HEK293T (cell line): ENCODE measurements at regions of chr1 and their contacts with region 1.

Region 1: DNA sequence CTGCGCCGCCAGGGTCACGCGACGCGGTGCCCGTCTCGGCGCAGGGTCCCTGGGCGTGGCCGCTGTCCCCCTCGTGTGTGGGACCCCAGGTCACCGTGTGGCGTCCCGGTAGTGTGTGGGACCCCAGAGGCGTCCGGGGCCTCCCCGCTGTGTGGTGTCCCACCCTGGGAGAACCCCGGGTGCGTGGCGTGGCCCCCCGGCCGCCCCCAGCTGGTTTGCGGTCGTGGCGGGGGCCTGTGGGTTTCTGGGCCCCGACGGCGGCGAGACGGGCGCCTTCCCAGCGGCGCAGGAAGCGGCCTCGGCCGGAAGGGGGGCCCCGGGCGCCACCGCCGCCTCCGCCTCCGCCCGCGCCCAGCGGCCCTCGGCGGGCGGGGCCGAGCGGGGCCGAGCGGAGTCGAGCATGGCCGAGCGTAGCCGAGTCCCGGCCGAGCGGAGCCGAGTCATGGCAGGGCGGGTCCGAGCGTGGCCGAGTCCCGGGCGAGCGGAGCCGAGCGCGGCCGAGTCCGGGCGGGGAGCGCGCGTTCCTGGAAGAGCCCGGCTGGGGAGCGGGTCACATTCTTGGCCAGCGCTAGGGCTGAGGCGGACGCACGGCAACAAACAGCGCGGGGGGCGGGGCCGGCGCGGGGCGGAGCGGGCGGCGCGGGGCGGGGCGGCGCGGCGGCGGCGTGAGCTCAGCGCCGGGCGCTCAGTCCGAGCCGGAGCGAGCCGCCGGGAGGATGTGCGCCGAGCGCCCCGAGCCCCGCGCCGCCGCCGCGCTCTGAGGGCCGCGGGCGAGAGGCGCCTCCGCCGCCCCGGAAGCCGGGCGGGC is 569 bp upstream of the SKI start:
- DNase-seq: peak; percentile 99

Region 2: DNA sequence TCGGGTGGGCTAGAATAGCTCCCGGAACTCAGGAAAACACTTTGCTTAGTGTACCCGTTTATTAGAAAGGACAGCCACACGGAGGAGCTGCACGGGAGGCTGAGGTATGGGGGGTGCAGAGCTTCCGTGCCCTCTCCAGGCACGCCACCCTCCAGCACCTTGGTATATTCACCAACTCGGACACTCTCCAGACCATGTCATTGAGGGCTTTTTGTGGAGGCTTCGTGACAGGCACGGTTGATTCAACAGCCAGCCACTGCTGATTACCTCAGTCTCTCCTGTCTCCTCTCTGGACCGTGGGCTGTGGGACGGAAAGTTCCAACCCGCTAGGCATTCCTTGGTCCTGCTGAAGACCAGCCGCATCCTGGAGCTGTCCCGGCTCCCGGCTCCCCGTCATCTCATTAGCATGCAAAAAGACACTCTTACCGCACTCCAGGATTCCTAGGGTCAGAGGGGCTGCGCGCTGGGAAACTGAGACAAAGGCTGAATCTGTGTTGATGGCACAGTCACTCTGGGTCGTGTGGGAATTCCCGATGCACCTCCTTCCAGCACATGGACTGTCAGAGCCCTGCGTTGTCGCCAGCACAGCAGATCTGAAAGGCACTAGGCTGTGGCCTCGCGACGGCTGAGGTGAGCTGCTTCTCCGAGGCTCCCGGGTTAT is 111.7 kb before region 1 on chr1:
- CTCF ChIA-PET with region 1: no interaction called
- POLR2A ChIA-PET with region 1: no interaction called
- DNase-seq: no peak

Region 3: DNA sequence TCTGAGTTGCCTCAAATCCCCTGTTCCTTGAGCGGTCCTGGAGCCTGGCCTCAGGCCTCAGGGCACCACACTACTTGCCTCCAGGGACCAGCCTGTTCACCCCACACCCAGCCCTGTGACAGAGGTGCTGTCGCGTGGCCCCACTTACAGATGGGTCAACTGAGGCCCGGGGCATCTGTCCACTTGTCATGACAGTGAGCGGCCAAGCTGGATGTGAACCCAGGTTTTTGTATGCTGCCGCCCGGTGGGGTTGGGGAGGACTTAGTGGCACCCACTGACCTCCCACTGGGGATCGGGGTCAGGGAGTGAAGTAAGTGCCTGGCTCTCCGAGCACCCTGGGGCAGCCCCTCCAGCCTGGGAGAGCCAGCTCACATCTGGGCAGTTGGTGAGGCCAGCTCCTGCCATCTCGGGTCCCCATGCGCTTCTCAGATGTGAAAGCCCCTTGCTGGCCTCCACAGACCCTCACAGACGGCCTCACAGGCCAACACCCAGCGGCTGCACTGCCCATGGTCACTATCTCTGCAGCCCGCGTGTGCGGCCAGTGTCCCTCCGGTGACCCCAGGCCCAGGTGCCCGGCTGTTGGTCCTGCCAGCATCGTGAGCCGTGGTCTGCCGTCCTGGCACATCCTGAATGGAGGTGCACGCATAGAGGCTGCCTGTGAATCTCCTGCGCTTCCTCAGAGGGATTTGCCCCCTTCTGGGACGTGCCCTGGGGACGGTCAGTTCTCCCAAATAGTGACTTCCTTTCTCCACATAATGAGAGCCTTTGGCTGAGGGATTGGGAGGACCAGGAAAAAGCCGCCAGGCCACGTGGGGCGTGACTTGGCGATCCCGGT is 23.7 kb before region 1 on chr1:
- CTCF ChIA-PET with region 1: interaction called, 4 read pairs
- POLR2A ChIA-PET with region 1: interaction called, 21 read pairs
- DNase-seq: no peak

Region 4: GRCh38 chr1:2212542-2213491 is 14.7 kb before region 1 on chr1:
- CTCF ChIA-PET with region 1: interaction called, 4 read pairs
- POLR2A ChIA-PET with region 1: interaction called, 18 read pairs
- DNase-seq: peak; percentile 74